Activated CD4-positive, alpha-beta memory T cell treated with anti-CD3 and anti-CD28 coated beads for 36 hours (primary cell): ENCODE measurements at regions of chr1 and their contacts with region 1.

Region 1: DNA sequence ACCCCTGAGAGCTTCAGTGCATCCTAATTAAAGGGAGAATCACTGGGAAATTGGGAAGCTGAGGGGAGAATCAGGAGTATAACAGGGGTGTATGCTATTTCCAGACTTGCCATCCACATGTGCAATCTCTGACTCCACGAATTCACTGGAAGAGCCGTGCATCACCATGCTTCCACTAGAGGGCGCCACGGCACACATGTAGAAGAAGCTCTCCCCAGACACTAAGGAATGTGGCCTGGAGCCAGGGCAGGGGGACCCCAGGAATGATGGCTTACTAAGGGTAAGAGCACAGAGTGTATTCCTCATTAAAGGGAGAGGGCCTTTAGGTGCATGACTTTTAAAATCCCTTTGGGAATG is 81.5 kb downstream of the ABCA4 start:
- DNase-seq: peak; percentile 71
- H3K4me3 Mint-ChIP-seq: no peak overlapping the region
- H3K27ac Mint-ChIP-seq: no peak overlapping the region
- H3K4me1 Mint-ChIP-seq: peaks cover 18% of the 10 kb centered on the region
- H3K27me3 Mint-ChIP-seq: peaks cover 34% of the 10 kb centered on the region

Region 2: GRCh38 chr1:93779540-93780192 is 259.8 kb before region 1 on chr1:
- CTCF ChIA-PET with region 1: no interaction called
- POLR2A ChIA-PET with region 1: no interaction called
- intact Hi-C with region 1: no loop called
- DNase-seq: no peak
- H3K4me3 Mint-ChIP-seq: no peak overlapping the region
- H3K27ac Mint-ChIP-seq: no peak overlapping the region
- H3K4me1 Mint-ChIP-seq: no peaks in the 10 kb centered on the region
- H3K27me3 Mint-ChIP-seq: no peaks in the 10 kb centered on the region

Region 3: DNA sequence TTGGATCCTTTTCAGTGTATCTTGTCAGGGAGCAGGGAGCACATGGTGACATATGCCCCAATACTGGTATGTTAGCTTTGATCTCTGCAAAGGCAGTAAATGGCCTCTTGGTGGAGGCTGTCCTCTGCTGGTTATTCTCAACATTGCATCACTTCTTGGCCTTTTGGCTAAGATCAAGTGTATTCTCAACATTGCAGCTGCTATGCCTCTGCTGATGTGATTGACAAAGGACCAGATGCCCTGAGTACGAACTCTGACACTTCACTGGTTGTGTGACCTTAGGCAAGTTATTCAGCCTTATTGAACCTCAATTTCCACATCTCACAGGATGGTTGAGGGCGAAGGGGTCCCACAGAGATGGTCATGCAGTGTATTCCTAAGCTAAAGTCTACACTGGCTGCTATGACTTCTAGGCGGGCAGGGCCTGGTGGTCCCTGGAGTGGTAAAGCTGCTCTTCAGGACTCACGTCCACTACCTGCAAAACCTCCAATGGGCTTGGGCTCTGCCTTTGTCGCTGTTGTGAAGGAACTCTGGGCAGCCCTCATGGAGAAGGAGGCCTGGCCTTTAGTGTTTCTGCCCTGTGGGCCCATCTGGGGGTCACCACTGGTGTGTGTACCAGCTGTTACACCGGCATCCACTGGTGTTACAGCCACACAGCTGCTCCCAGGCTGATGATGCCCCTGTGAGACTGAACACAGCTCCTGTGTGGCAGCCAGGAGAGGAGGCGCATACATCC is 225.3 kb before region 1 on chr1:
- CTCF ChIA-PET with region 1: no interaction called
- POLR2A ChIA-PET with region 1: no interaction called
- intact Hi-C with region 1: no loop called
- DNase-seq: peak; percentile 64
- H3K4me3 Mint-ChIP-seq: no peak overlapping the region
- H3K27ac Mint-ChIP-seq: no peak overlapping the region
- H3K4me1 Mint-ChIP-seq: peaks cover 21% of the 10 kb centered on the region
- H3K27me3 Mint-ChIP-seq: no peaks in the 10 kb centered on the region

Region 4: GRCh38 chr1:93909146-93910050 is 130.1 kb before region 1 on chr1 and contains the start of gene GCLM:
- CTCF ChIA-PET with region 1: interaction called, 5 read pairs
- POLR2A ChIA-PET with region 1: no interaction called
- intact Hi-C with region 1: loop called (anchors 5 kb)
- DNase-seq: peak; percentile 92
- H3K4me3 Mint-ChIP-seq: peak within 1 kb of the TSS; percentile 91
- H3K27ac Mint-ChIP-seq: peak within 1 kb of the TSS; percentile 87
- H3K4me1 Mint-ChIP-seq: peaks cover 29% of the 10 kb centered on the region
- H3K27me3 Mint-ChIP-seq: no peaks in the 10 kb centered on the region
- total RNA-seq, gene GCLM: 21.7 to 26.5 TPM

Region 5: DNA sequence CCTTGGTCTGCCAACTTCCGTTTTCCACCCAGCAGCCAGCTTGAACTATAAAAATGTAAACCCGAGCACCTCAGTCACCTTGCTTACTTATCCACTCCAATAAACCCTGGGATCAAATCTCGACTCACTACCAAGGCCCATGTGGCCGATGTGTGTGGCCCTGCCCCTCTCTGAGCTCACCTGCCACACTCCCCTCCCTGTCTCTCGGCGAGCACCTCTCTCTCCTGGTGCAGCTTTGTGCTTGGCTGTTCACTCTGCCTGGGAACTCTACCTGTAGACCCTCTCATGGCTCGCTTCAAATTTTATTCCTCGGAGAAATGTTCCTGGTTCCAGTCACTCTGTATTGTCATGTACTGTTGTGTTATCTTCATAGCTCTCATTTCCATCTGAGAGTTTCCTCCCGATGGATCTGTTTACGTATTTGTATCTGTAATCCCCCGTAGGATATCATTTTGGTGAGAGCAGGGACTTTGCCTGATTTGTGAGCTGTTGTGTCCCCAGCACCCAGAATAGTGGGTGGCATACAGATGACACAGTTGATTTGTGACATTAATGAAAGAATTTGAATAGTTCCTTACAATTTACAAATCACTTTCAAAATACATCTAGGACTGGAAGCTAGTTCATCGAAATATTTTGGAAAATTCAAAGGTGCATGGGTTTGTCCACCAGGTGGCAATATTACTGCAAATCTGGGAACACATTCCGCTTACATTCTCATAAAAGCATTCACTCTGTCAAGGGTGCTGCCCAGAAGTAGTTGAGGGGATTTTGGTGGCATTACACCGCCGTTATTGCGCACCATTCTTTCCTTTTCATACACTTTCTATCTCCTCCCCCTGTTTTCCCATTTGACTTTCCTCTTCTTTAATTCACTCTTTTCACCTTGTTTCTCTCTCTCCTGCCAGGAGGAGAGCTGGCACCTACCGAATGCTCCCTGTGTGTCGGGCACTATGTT is 13.8 kb before region 1 on chr1:
- CTCF ChIA-PET with region 1: interaction called, 66 read pairs
- POLR2A ChIA-PET with region 1: no interaction called
- intact Hi-C with region 1: no loop called
- DNase-seq: no peak
- H3K4me3 Mint-ChIP-seq: no peak overlapping the region
- H3K27ac Mint-ChIP-seq: no peak overlapping the region
- H3K4me1 Mint-ChIP-seq: no peaks in the 10 kb centered on the region
- H3K27me3 Mint-ChIP-seq: peaks cover 2% of the 10 kb centered on the region

Region 6: DNA sequence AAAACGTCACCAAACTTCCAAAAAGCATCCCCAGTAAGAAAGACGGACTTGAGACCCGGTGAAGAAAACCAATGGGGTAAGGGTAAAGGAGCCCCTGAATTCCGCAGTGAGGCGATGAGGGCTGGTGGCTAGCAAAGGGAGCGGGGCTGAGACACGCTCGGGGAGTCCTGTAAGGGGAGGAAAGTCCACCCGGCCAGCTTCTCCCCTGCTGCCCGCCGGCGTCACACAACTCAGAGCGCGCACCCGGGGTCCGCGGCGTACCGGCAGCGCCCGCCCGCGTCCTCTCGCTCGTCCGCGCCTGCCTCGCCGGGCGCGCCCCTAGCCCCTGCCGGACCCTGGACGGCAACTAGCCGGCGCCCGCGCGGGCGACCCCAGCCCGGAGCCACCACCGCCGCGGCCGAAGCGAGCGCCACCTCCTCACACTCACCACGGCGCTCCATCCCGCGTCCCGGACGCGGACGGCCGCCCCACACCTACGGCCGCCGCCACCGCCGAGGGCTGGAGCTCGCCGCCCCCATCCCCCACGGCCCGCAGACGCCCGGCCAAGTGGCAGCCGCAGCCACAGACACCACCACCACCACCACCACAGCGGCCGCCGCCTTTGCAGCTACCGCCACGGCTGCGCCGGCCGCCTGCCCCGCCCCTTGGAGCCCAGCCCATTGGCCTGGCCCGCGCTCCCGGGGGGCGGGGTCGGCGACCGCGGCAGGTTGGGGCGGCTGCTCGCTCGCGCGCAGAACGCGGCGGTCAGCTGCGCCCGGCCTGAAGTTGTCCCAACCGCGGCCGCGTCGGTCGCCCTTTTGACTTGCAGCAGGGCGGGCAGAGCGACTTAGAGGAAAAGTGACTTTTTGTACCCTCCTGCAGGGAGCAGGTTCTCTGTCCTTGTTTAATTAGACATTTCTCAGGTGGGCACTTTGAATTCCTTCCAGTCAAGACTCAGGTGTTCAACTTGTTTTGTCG is 207.9 kb after region 1 on chr1:
- CTCF ChIA-PET with region 1: interaction called, 3 read pairs
- POLR2A ChIA-PET with region 1: no interaction called
- intact Hi-C with region 1: loop called (anchors 10 kb)
- DNase-seq: peak; percentile 36
- H3K4me3 Mint-ChIP-seq: peak overlapping the region; percentile 73
- H3K27ac Mint-ChIP-seq: no peak overlapping the region
- H3K4me1 Mint-ChIP-seq: peaks cover 10% of the 10 kb centered on the region
- H3K27me3 Mint-ChIP-seq: peaks cover 41% of the 10 kb centered on the region

Region 7: DNA sequence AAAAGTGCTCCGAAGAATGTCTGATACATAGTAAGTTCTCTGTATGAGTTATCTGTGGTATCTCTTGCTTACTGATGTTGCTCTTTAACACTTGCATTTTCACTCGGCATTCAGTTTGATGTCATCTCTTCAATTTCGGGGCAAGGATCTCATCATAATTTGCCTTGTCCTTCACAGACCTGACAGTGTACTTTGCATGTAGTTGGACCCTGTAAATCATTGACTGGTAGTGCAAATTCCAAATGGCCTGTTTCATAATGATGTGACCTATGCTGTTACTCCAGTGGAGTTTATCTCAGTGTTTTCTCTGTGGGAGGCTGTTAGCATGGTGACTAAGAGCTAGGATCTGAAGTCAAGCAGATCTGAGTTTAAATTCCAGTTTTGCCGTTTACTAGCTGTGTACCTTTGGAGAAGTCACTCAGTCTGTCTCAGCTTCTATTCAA is 344.5 kb after region 1 on chr1:
- CTCF ChIA-PET with region 1: no interaction called
- POLR2A ChIA-PET with region 1: no interaction called
- intact Hi-C with region 1: loop called (anchors 1 kb)
- DNase-seq: peak; percentile 16
- H3K4me3 Mint-ChIP-seq: no peak overlapping the region
- H3K27ac Mint-ChIP-seq: peak overlapping the region; percentile 29
- H3K4me1 Mint-ChIP-seq: peaks cover 21% of the 10 kb centered on the region
- H3K27me3 Mint-ChIP-seq: peaks cover 9% of the 10 kb centered on the region